ENCODE measurements at regions of chr1 and their contacts with region 1.

Region 1: DNA sequence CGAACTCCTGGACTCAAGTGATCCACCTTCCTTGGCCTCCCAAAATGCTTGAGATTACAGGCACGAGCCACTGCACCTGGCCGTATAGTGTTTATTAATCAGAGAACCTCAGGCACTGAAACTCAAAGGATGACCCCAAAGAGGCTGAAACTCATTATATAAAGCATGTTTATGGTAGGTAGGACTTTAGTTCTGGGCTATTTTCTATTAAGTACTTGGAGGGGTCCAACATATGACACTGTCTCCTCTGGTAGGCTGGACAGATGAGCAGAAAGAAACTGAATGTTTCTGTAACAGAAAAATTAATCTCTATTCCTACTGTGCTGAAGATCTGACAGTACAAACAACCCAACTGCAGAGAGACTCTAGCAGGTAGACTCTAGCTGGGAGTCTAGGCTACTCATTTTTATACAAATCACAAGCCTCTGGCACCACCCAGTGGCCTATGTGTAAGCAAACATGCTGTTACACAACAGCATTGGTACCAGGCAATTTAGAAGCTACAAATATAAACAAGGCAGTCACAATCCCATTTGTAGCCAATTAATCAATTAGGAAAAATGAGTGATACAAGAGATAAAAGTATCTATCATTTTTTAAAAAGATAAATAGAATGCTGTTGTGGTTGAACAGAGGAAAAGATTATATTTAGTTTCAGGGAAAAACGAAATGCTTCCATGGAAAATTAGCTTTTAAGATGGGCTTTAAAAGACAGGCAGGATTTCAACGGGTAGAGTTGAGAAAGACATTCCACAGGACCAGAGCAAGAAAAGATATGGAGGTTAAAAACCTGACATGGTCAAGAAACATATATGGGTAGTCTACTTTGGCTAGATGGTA is 10.4 kb downstream of the DCAF8 start:
- DNase-seq: peak; percentile 73
- H3K4me3 Mint-ChIP-seq: no peak overlapping the region
- H3K27ac Mint-ChIP-seq: no peak overlapping the region
- H3K4me1 Mint-ChIP-seq: peaks cover 22% of the 10 kb centered on the region
- H3K27me3 Mint-ChIP-seq: no peaks in the 10 kb centered on the region

Region 2: GRCh38 chr1:158290321-158290844 is 1961.5 kb before region 1 on chr1:
- CTCF ChIA-PET with region 1: no interaction called
- intact Hi-C with region 1: no loop called
- DNase-seq: no peak
- H3K4me3 Mint-ChIP-seq: no peak overlapping the region
- H3K27ac Mint-ChIP-seq: no peak overlapping the region
- H3K4me1 Mint-ChIP-seq: peaks cover 8% of the 10 kb centered on the region
- H3K27me3 Mint-ChIP-seq: peaks cover 18% of the 10 kb centered on the region

Region 3: GRCh38 chr1:160058087-160058486 is 193.8 kb before region 1 on chr1:
- CTCF ChIA-PET with region 1: no interaction called
- intact Hi-C with region 1: no loop called
- DNase-seq: no peak
- H3K4me3 Mint-ChIP-seq: no peak overlapping the region
- H3K27ac Mint-ChIP-seq: no peak overlapping the region
- H3K4me1 Mint-ChIP-seq: no peaks in the 10 kb centered on the region
- H3K27me3 Mint-ChIP-seq: peaks cover 6% of the 10 kb centered on the region

Region 4: GRCh38 chr1:160085686-160086455 is 166.0 kb before region 1 on chr1:
- CTCF ChIA-PET with region 1: interaction called, 14 read pairs
- intact Hi-C with region 1: no loop called
- DNase-seq: peak; percentile 88
- H3K4me3 Mint-ChIP-seq: no peak overlapping the region
- H3K27ac Mint-ChIP-seq: no peak overlapping the region
- H3K4me1 Mint-ChIP-seq: peaks cover 5% of the 10 kb centered on the region
- H3K27me3 Mint-ChIP-seq: peaks cover 17% of the 10 kb centered on the region

Region 5: DNA sequence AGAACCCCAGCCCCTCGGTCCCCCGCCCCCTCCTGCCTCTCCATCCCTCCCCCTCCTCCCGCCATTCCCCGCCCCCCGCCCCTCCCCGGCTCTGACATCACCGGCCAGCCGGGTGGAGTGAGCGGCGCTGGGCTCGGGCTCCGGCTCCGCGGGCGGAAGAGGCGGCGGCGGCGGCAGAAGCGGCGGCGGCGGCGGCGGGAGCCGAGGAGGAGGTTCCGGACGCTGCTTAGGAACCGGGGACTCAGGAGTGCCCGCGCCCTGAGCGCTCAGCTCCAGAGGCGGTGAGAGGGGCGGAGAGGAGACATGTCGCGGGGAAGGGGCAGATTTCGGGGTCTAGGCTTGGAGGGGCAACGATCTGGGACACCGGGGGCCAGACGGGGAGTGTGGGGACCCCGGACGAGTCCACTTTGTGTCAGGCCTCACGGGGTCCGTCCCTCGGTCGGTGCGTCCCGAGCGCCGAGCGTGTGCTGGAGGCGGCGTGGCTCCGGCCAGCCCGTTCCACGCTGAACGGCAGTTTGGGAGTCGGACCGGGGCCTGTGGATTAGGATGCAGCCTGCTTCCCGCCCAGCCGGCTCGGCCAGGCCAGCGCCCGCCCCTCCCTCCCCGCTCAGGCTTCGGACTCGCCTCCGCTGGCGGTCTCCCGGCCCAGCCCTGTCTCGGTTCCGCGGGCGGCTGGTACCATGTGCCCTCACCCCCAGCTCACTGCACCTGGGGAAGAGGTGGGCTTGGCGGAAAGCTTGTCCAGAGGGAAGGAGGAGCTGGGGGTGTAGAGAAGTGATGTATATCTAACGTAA is 46.5 kb before region 1 on chr1 and contains the start of gene PEA15:
- CTCF ChIA-PET with region 1: interaction called, 12 read pairs
- intact Hi-C with region 1: loop called (anchors 2 kb)
- DNase-seq: peak; percentile 79
- H3K4me3 Mint-ChIP-seq: peak within 1 kb of the TSS; percentile 85
- H3K27ac Mint-ChIP-seq: peak within 1 kb of the TSS; percentile 87
- H3K4me1 Mint-ChIP-seq: peaks cover 46% of the 10 kb centered on the region
- H3K27me3 Mint-ChIP-seq: no peaks in the 10 kb centered on the region
- total RNA-seq, gene PEA15: 34.3 to 42.0 TPM

Region 6: DNA sequence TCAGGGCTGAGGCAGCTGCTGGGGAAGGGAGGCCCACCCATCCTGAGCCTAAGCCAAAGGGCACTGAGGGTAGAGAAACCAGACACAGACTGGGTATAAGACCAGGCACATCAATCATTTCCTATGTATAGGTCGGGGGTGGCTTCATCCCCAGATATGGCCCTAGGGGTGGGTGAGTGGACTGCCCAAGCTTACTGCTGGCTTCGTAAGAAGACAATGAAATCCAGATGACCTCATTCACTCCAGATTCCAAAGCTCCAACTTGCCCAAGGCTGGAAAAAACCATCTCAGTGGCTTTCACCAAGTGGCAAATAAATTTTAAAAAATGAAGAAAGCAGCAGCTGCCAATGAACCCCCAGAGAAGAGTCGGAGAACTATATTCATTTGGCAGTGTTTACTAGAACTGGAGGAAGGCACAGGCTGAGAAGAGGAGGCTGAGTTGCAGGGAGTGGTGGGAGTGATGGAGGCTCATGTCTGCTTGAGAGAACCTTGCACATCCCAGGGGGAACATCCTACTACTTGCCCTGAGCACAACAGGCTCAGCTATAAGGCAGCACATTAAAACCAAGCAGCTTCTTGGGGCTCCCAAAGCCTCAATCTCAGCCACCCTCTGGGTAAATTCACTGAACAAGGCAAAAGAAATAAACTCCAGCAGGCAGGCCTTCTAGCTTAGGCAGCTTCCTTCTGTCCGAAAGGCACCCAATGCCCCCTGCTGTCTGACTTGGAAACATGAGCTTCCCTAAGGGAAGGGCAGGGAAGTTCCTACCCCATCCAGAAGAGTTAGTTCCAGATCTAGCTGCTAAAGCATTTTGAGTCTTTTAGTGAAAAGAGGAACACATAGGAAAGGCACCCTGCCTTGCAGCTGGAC is 32.6 kb before region 1 on chr1:
- CTCF ChIA-PET with region 1: interaction called, 26 read pairs
- intact Hi-C with region 1: no loop called
- DNase-seq: no peak
- H3K4me3 Mint-ChIP-seq: no peak overlapping the region
- H3K27ac Mint-ChIP-seq: no peak overlapping the region
- H3K4me1 Mint-ChIP-seq: no peaks in the 10 kb centered on the region
- H3K27me3 Mint-ChIP-seq: no peaks in the 10 kb centered on the region

Region 7: GRCh38 chr1:160232911-160233310 is 19.0 kb before region 1 on chr1:
- CTCF ChIA-PET with region 1: interaction called, 12 read pairs
- intact Hi-C with region 1: no loop called
- DNase-seq: no peak
- H3K4me3 Mint-ChIP-seq: no peak overlapping the region
- H3K27ac Mint-ChIP-seq: no peak overlapping the region
- H3K4me1 Mint-ChIP-seq: peaks cover 19% of the 10 kb centered on the region
- H3K27me3 Mint-ChIP-seq: no peaks in the 10 kb centered on the region

Region 8: GRCh38 chr1:160238408-160238807 is 13.5 kb before region 1 on chr1:
- CTCF ChIA-PET with region 1: interaction called, 12 read pairs
- intact Hi-C with region 1: no loop called
- DNase-seq: no peak
- H3K4me3 Mint-ChIP-seq: no peak overlapping the region
- H3K27ac Mint-ChIP-seq: no peak overlapping the region
- H3K4me1 Mint-ChIP-seq: peaks cover 18% of the 10 kb centered on the region
- H3K27me3 Mint-ChIP-seq: no peaks in the 10 kb centered on the region